ENCODE measurements at regions of chr5 and their contacts with region 1.

Region 1: GRCh38 chr5:176573564-176574296 is 24.6 kb downstream of the CDHR2 start:
- DNase-seq: peak in 1 of 2 donors; percentile 43
- H3K4me3 ChIP-seq: no peak overlapping the region
- H3K27ac ChIP-seq: no peak overlapping the region
- H3K4me1 ChIP-seq: no peaks in the 10 kb centered on the region
- H3K27me3 ChIP-seq: peaks cover 0 to 61% of the 10 kb centered on the region in 2 donors
- CTCF ChIP-seq: peak; percentile 63

Region 2: GRCh38 chr5:176466245-176466871 is 107.4 kb before region 1 on chr5:
- intact Hi-C with region 1: no loop called
- DNase-seq: no peak
- H3K4me3 ChIP-seq: no peak overlapping the region
- H3K27ac ChIP-seq: no peak overlapping the region
- H3K4me1 ChIP-seq: peaks cover 0 to 21% (median 7%) of the 10 kb centered on the region in 4 donors
- H3K27me3 ChIP-seq: no peaks in the 10 kb centered on the region
- CTCF ChIP-seq: no peak

Region 3: GRCh38 chr5:176887252-176887849 is 313.6 kb after region 1 on chr5:
- intact Hi-C with region 1: loop called (anchors 10 kb)
- DNase-seq: no peak
- H3K4me3 ChIP-seq: no peak overlapping the region
- H3K27ac ChIP-seq: no peak overlapping the region
- H3K4me1 ChIP-seq: no peaks in the 10 kb centered on the region
- H3K27me3 ChIP-seq: peaks cover 0 to 5% of the 10 kb centered on the region in 2 donors
- CTCF ChIP-seq: no peak

Measured in tibial artery (tissue), 4 donors.